B cell (primary cell): ENCODE measurements at regions of chr5 and their contacts with region 1.

Region 1: DNA sequence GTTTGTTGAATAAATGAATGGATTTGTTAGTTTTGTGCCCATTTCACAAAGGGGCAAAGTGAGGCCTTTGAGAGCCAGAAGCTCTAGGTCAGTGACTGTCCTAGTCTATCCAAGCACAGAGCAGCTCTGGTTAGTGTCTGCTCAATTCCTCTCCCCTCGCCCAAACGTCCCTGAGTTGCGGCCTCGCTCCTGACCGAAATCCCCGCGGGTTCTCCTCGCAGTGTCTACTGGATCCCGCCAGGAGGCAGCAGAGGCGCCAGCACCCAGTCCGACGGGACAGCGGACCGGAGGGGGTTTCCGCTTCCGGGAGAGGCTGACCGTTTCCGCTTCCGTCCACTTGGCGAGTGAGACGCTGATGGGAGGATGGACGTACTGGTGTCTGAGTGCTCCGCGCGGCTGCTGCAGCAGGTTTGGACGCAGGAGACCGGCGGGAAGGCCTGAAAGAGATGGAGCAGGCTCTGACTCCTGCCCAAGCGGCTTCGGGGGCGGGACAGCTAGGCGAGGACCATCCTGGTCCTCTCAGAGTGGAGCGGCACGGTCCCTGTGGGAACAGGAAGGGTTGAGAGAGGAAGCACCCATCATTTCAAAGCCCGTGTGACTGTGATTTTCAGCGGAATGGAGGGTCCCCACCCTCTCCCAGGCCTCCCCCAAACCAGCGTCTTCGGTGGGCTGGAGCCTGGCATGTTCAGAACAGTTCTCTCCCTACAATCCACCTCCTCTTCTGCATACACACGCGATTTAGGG is at the start of gene RARS1:
- DNase-seq: peak; percentile 89
- ATAC-seq: peak; percentile 93
- H3K4me3 ChIP-seq: peak within 1 kb of the TSS; percentile 73 to 97 (median 93)
- H3K4me3 Mint-ChIP-seq: peak within 1 kb of the TSS; percentile 100
- H3K27ac ChIP-seq: peak within 1 kb of the TSS in 1 of 2 donors; percentile 50
- H3K27ac Mint-ChIP-seq: peak within 1 kb of the TSS; percentile 92
- H3K4me1 ChIP-seq: peaks cover 7 to 12% of the 10 kb centered on the region in 2 donors
- H3K4me1 Mint-ChIP-seq: peaks cover 33% of the 10 kb centered on the region
- H3K27me3 ChIP-seq: peaks cover 0 to 6% (median 0%) of the 10 kb centered on the region in 4 experiments
- H3K27me3 Mint-ChIP-seq: no peaks in the 10 kb centered on the region
- CTCF ChIP-seq: peak; percentile 93
- total RNA-seq, gene RARS1: 65.4 and 69.4 TPM in 2 replicates

Region 2: DNA sequence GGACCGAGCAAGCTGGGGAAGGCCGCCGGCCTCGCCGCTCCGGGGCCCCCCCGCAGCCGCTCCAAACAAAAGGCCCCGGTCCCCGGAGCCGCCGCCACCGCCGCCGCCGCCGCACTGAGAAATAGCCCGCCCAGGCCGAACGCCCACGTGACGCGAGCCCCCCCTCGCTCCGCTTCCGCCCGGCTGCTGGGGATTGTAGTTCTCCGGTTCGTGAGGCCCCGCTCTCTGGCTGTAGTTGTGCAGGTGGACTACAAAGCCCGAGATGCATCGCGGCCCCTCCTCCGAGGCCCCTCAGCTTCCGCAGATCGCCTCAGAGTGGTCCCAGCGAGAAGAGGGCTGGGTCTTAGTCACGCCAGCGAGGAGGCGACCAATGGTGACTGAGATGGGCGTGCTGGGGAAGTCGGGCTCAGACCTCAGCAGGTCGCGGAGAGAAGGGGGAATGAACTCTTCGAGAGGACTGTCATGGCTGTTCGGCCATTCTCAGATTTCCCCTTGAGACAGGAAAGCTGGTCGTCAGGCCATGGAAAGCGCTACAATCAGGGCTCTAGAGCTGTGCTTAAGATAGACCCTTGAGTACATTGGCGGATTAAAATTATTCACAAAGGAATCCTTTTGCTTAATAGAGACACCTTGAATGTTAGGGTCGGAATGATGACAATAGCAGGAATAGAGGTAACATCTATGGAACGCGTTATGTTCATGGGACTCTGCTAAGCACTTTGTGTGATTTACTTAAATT is 93.3 kb after region 1 on chr5:
- CTCF ChIA-PET with region 1: interaction called, 3 read pairs
- POLR2A ChIA-PET with region 1: no interaction called
- intact Hi-C with region 1: loop called (anchors 1 kb)
- DNase-seq: peak; percentile 99
- ATAC-seq: peak; percentile 95
- H3K4me3 ChIP-seq: peak overlapping the region; percentile 49 to 90 (median 76)
- H3K4me3 Mint-ChIP-seq: peak overlapping the region; percentile 87
- H3K27ac ChIP-seq: peak overlapping the region; percentile 79 to 94
- H3K27ac Mint-ChIP-seq: peak overlapping the region; percentile 95
- H3K4me1 ChIP-seq: peaks cover 18 to 29% of the 10 kb centered on the region in 2 donors
- H3K4me1 Mint-ChIP-seq: peaks cover 45% of the 10 kb centered on the region
- H3K27me3 ChIP-seq: no peaks in the 10 kb centered on the region
- H3K27me3 Mint-ChIP-seq: no peaks in the 10 kb centered on the region
- CTCF ChIP-seq: no peak